Aorta (tissue), 5 donors: ENCODE measurements at regions of chr7 and their contacts with region 1.

Region 1: DNA sequence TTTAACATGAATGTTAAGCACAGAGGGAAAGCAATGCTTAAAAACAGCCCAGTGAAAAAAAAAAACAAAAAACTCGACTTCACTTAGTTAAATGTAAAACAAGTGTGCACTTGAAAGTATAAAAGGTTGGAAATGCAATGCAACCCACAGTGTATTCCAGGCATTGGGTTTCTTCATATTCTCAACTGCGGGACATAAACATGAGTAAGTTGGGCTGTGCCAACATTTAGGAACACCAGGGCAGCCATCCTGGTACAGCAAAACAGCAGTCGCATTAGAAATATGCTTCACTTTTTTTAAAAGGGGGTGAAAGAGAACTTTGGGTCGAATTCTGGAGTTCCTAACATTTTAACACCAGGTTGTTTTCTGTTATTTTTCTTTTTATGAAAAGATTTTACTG is 937 bp downstream of the STEAP1 start:
- DNase-seq: no peak
- ATAC-seq: no peak
- H3K4me3 ChIP-seq: no peak overlapping the region
- H3K27ac ChIP-seq: no peak overlapping the region
- H3K4me1 ChIP-seq: no peaks in the 10 kb centered on the region
- H3K27me3 ChIP-seq: no peaks in the 10 kb centered on the region

Region 2: GRCh38 chr7:90078921-90079320 is 76.3 kb before region 1 on chr7:
- intact Hi-C with region 1: no loop called
- DNase-seq: no peak
- ATAC-seq: no peak
- H3K4me3 ChIP-seq: no peak overlapping the region
- H3K27ac ChIP-seq: no peak overlapping the region
- H3K4me1 ChIP-seq: no peaks in the 10 kb centered on the region
- H3K27me3 ChIP-seq: no peaks in the 10 kb centered on the region

Region 3: GRCh38 chr7:90192872-90193750 is 37.9 kb after region 1 on chr7:
- intact Hi-C with region 1: no loop called
- DNase-seq: no peak
- ATAC-seq: peak; percentile 19
- H3K4me3 ChIP-seq: no peak overlapping the region
- H3K27ac ChIP-seq: no peak overlapping the region
- H3K4me1 ChIP-seq: peaks cover 0 to 1% of the 10 kb centered on the region in 2 donors
- H3K27me3 ChIP-seq: no peaks in the 10 kb centered on the region

Region 4: DNA sequence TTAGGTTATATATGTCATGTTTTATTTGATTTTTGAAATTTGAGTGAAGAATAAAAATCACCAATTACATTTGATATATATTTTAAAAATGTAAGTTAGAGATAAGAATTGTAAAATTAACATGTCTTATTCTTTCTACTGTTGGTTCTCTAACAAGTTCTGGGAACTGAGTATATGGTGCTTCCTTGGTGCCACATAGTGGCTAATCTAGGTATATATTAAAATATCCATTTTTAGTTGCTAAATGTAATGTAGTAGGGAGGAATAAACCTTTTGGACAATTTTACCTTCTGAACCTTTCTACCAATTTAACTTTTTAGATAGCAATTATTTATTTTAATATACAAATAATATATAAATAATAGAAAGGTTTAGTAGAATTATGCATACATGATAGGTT is 107.2 kb after region 1 on chr7:
- intact Hi-C with region 1: loop called (anchors 5 kb)
- DNase-seq: no peak
- ATAC-seq: no peak
- H3K4me3 ChIP-seq: no peak overlapping the region
- H3K27ac ChIP-seq: no peak overlapping the region
- H3K4me1 ChIP-seq: peaks cover 0 to 4% of the 10 kb centered on the region in 2 donors
- H3K27me3 ChIP-seq: no peaks in the 10 kb centered on the region

Region 5: DNA sequence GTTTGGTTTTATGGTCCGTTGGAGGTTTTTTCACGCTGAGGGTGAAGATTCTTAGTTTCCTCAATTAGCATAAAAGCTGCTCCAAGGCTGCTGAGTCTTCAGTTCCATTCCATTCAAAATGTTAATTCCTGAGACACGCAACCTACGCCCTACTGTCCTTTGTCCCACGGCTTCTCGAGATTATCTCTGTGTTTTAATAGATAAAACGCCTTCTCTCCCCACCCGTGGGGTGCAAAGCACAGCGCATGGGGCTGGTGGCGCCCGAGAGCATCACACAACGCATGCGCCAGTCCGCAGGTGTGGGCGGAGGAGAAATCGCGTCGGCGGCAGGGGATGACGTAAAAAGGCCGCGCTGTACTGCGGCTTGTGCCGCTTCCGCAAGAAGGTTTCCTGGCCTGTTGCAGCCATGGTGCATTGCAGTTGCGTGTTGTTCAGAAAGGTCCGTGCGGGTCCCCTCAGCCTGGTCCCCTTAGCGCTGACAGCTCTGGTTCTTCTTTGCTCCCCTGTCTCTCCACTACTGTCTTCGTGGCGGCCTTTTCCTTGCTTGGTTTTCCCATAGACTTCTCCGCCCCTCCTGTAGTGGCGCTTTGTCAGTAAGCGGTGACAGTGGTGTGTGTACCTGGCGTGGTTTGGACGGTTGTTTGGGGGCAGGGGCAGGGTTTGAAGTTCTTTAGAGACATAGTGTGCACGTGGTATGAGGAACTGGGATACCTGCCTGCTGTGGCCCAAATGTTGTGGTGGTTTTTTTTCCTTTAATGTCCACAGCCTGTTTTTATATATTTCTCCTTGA is 191.3 kb after region 1 on chr7 and contains the start of gene GTPBP10:
- intact Hi-C with region 1: loop called in 1 of 2 experiments (anchors 5 kb)
- DNase-seq: peak; percentile 96 to 98
- ATAC-seq: peak; percentile 100
- H3K4me3 ChIP-seq: peak within 1 kb of the TSS; percentile 54 to 94
- H3K27ac ChIP-seq: peak within 1 kb of the TSS; percentile 71 to 93
- H3K4me1 ChIP-seq: no peaks in the 10 kb centered on the region
- H3K27me3 ChIP-seq: no peaks in the 10 kb centered on the region
- total RNA-seq, gene GTPBP10: 18.2 to 24.6 TPM

Region 6: GRCh38 chr7:90383422-90383821 is 228.2 kb after region 1 on chr7:
- intact Hi-C with region 1: no loop called
- DNase-seq: no peak
- ATAC-seq: no peak
- H3K4me3 ChIP-seq: no peak overlapping the region
- H3K27ac ChIP-seq: no peak overlapping the region
- H3K4me1 ChIP-seq: no peaks in the 10 kb centered on the region
- H3K27me3 ChIP-seq: no peaks in the 10 kb centered on the region

Region 7: DNA sequence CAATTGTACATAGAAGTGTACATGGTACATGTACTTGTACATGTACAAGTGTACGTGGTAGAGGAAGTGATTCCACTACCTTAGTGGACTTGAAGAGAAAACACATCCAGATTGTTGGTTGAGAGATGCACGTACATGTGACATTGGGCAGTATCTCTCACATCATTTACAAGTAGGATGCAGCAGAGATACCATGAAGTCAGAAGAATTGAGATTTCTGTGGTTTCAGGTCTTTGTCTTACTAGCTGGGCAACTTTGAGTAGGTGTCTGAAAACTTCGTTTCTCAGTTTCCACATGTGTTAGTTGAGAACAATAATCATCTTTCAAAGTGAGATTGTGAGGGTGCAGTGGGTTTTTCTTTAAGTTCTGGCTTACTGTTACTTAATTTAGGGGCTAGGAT is 269.5 kb after region 1 on chr7:
- intact Hi-C with region 1: loop called (anchors 5 kb)
- DNase-seq: no peak
- ATAC-seq: no peak
- H3K4me3 ChIP-seq: no peak overlapping the region
- H3K27ac ChIP-seq: no peak overlapping the region
- H3K4me1 ChIP-seq: no peaks in the 10 kb centered on the region
- H3K27me3 ChIP-seq: no peaks in the 10 kb centered on the region

Region 8: GRCh38 chr7:90824386-90825307 is 669.4 kb after region 1 on chr7:
- intact Hi-C with region 1: no loop called
- DNase-seq: no peak
- ATAC-seq: no peak
- H3K4me3 ChIP-seq: no peak overlapping the region
- H3K27ac ChIP-seq: no peak overlapping the region
- H3K4me1 ChIP-seq: no peaks in the 10 kb centered on the region
- H3K27me3 ChIP-seq: no peaks in the 10 kb centered on the region